ENCODE measurements at regions of chr22 and their contacts with region 1.

Region 1: DNA sequence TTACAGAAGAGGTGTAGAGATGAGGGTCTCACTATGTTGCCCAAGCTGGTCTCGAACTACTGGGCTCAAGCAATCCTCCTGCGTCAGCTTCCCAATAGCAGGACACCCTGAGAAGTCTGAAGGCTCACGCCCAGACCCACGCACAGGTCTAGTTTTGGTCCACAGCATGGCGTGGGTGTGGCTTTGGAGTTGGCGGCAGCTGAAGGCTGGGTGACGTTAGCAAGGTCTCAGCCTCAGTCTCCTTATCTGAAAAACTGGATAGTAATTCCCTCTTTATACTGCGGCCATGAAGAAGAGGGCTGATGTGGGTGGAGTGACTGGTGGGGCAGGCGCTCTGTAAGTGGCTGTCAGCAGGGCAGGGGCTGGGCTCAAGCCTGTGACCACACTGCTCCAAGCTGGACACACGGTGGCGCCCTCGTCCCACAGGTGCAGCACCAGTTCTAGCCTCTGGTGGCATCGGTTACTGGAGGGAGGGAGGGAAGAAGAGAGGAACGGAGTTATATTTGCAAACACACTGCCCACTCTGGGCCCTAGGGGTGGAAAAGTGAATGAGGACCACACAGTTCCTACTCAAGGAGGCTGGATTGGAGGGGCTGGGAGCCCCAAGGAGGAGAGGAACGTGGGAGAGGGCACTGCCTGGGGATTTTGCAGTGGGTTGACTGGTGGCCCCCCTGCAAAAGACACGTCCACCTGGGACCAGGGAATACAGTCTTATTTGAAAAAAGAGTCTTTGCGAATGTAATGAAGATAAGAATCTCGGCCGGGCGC is 19.6 kb upstream of the CARD10 start:
- DNase-seq: peak; percentile 96 to 97 (median 97)
- H3K4me3 ChIP-seq: peak overlapping the region in 1 of 3 donors; percentile 32
- H3K27ac ChIP-seq: no peak overlapping the region
- H3K4me1 ChIP-seq: peaks cover 0 to 11% (median 2%) of the 10 kb centered on the region in 3 donors
- H3K27me3 ChIP-seq: no peaks in the 10 kb centered on the region
- CTCF ChIP-seq: peak; percentile 100

Region 2: DNA sequence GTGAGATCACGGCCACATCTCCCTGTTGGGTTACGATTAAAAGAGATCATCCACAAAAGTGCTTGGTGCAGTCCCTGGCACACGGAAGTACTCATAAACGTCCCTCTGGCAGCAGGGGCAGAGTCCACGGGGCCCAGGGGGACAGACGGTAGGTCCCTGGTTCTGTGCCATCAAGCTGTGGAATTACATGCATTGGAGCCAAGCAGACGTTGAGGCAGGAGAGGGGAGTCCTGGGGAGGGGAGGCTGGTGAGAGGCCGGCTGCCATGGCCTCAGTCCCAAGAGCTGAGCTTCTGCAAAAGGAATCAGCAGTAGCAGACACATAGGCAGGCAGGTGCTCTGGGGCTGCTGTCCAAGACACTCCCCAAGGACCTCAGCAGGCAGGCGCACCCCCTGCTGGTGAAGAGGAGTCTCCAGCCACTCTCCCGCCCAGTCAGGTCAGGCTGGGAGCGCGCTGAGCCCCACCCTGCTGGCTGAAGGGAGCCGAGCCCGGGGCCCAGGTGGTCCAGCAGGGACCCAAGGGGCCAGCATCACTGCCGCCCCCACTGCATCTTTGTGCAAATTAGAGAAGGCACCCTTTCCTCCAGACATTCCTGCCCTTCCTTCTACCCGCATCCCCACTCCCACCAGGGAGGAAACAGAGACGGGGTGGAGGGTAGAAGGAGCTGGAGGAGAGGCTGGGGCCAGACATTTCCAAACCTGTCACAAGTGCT is 494.8 kb before region 1 on chr22:
- intact Hi-C with region 1: no loop called
- DNase-seq: peak in 4 of 5 donors; percentile 67 to 85 (median 75)
- H3K4me3 ChIP-seq: no peak overlapping the region
- H3K27ac ChIP-seq: no peak overlapping the region
- H3K4me1 ChIP-seq: peaks cover 0 to 2% (median 0%) of the 10 kb centered on the region in 3 donors
- H3K27me3 ChIP-seq: no peaks in the 10 kb centered on the region
- CTCF ChIP-seq: peak; percentile 68

Region 3: GRCh38 chr22:37571258-37571991 is 32.7 kb after region 1 on chr22:
- intact Hi-C with region 1: loop called (anchors 5 kb)
- DNase-seq: no peak
- H3K4me3 ChIP-seq: no peak overlapping the region
- H3K27ac ChIP-seq: no peak overlapping the region
- H3K4me1 ChIP-seq: peaks cover 0 to 35% (median 25%) of the 10 kb centered on the region in 3 donors
- H3K27me3 ChIP-seq: no peaks in the 10 kb centered on the region
- CTCF ChIP-seq: no peak

Measured in kidney (tissue), 22 donors.